ENCODE measurements at regions of chr5 and their contacts with region 1.

Region 1: GRCh38 chr5:42767491-42768105 is 11.0 kb downstream of the CCDC152 start:
- DNase-seq: peak in 1 of 2 experiments; percentile 31
- H3K4me3 ChIP-seq: no peak overlapping the region
- H3K4me3 Mint-ChIP-seq: peak overlapping the region; percentile 53
- H3K27ac Mint-ChIP-seq: no peak overlapping the region
- H3K4me1 ChIP-seq: peaks cover 12% of the 10 kb centered on the region
- H3K4me1 Mint-ChIP-seq: peaks cover 16% of the 10 kb centered on the region
- H3K27me3 ChIP-seq: no peaks in the 10 kb centered on the region
- H3K27me3 Mint-ChIP-seq: no peaks in the 10 kb centered on the region
- CTCF ChIP-seq: peak; percentile 24 to 63

Region 2: GRCh38 chr5:42005561-42006153 is 761.9 kb before region 1 on chr5:
- CTCF ChIA-PET with region 1: interaction called, 4 read pairs
- POLR2A ChIA-PET with region 1: no interaction called
- intact Hi-C with region 1: loop called (anchors 1 kb)
- DNase-seq: no peak
- H3K4me3 ChIP-seq: no peak overlapping the region
- H3K4me3 Mint-ChIP-seq: no peak overlapping the region
- H3K27ac Mint-ChIP-seq: no peak overlapping the region
- H3K4me1 ChIP-seq: no peaks in the 10 kb centered on the region
- H3K4me1 Mint-ChIP-seq: no peaks in the 10 kb centered on the region
- H3K27me3 ChIP-seq: no peaks in the 10 kb centered on the region
- H3K27me3 Mint-ChIP-seq: peaks cover 2% of the 10 kb centered on the region
- CTCF ChIP-seq: peak; percentile 66 to 74

Region 3: GRCh38 chr5:42423285-42424165 is 344.1 kb before region 1 on chr5 and contains the start of gene GHR:
- CTCF ChIA-PET with region 1: interaction called, 6 read pairs
- POLR2A ChIA-PET with region 1: no interaction called
- intact Hi-C with region 1: loop called (anchors 1 kb)
- DNase-seq: peak; percentile 83 to 84
- H3K4me3 ChIP-seq: peak within 1 kb of the TSS; percentile 63
- H3K4me3 Mint-ChIP-seq: no peak within 1 kb of the TSS
- H3K27ac Mint-ChIP-seq: no peak within 1 kb of the TSS
- H3K4me1 ChIP-seq: no peaks in the 10 kb centered on the region
- H3K4me1 Mint-ChIP-seq: no peaks in the 10 kb centered on the region
- H3K27me3 ChIP-seq: no peaks in the 10 kb centered on the region
- H3K27me3 Mint-ChIP-seq: no peaks in the 10 kb centered on the region
- CTCF ChIP-seq: peak; percentile 73 to 74
- total RNA-seq, gene GHR: 0.54 and 1.2 TPM in 2 replicates

Region 4: DNA sequence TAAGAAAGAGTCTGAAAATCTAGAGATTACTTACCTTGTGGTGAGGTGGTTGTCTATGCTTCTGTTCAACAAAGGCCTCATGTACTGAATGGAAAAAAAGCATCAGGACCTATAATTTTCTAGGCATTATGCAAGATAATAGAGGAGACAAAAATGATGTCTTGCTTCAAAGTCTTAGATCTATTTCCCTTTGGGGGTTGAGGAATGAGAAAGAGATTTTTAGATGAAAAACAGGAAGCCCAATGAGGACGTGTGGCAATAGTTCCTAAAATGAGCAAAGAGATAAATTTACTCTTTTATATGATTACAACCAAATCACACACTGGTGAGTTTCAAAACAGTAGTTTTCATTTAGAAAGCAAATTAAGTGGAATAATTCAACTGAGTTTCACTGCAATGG is 244.8 kb before region 1 on chr5:
- CTCF ChIA-PET with region 1: no interaction called
- POLR2A ChIA-PET with region 1: no interaction called
- intact Hi-C with region 1: no loop called
- DNase-seq: no peak
- H3K4me3 ChIP-seq: no peak overlapping the region
- H3K4me3 Mint-ChIP-seq: no peak overlapping the region
- H3K27ac Mint-ChIP-seq: no peak overlapping the region
- H3K4me1 ChIP-seq: no peaks in the 10 kb centered on the region
- H3K4me1 Mint-ChIP-seq: no peaks in the 10 kb centered on the region
- H3K27me3 ChIP-seq: no peaks in the 10 kb centered on the region
- H3K27me3 Mint-ChIP-seq: no peaks in the 10 kb centered on the region
- CTCF ChIP-seq: no peak

Region 5: DNA sequence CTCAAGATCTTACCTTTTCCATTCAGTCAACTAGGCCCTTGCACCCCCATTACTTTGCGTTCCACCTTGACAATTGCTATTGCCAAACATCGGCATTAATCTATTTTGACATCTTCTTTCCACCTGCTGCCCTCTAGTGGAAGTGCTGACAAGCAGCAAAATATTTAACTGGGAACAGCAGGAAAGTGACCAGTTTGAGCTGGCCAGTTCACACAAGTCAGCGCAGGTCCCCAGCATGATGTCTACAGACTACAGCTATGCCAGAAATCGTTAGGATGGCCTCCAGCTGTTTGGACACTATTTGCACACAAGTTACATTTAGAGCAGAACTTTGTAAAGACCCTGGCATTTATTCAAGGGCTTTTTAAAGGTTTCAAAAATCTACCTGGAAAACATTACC is 184.3 kb before region 1 on chr5:
- CTCF ChIA-PET with region 1: interaction called, 4 read pairs
- POLR2A ChIA-PET with region 1: no interaction called
- intact Hi-C with region 1: loop called (anchors 2 kb)
- DNase-seq: peak; percentile 54 to 66
- H3K4me3 ChIP-seq: no peak overlapping the region
- H3K4me3 Mint-ChIP-seq: no peak overlapping the region
- H3K27ac Mint-ChIP-seq: no peak overlapping the region
- H3K4me1 ChIP-seq: no peaks in the 10 kb centered on the region
- H3K4me1 Mint-ChIP-seq: no peaks in the 10 kb centered on the region
- H3K27me3 ChIP-seq: no peaks in the 10 kb centered on the region
- H3K27me3 Mint-ChIP-seq: peaks cover 3% of the 10 kb centered on the region
- CTCF ChIP-seq: peak; percentile 69 to 72

Region 6: DNA sequence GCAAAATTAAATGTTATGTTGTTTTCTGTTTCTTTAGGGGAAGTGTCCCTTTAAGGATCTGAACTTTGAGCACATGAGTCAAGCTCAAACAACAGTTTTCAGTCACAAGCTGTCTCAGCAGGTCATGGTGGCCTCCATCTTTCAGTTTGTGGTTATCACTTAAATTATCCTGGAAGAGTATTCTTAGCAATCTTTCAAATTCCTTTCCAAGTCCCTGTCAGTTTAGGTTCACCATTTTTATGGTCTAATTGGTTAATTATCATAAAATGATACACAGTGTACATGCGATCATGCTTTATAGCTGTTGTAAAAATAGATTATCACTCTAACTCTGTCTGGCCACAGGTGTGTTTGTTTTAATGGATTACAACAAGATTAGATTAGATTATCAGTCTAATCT is 87.2 kb after region 1 on chr5:
- CTCF ChIA-PET with region 1: no interaction called
- POLR2A ChIA-PET with region 1: no interaction called
- intact Hi-C with region 1: loop called (anchors 1 kb)
- DNase-seq: peak; percentile 60 to 74
- H3K4me3 ChIP-seq: no peak overlapping the region
- H3K4me3 Mint-ChIP-seq: no peak overlapping the region
- H3K27ac Mint-ChIP-seq: peak overlapping the region; percentile 51
- H3K4me1 ChIP-seq: peaks cover 39% of the 10 kb centered on the region
- H3K4me1 Mint-ChIP-seq: peaks cover 20% of the 10 kb centered on the region
- H3K27me3 ChIP-seq: no peaks in the 10 kb centered on the region
- H3K27me3 Mint-ChIP-seq: no peaks in the 10 kb centered on the region
- CTCF ChIP-seq: no peak

Region 7: DNA sequence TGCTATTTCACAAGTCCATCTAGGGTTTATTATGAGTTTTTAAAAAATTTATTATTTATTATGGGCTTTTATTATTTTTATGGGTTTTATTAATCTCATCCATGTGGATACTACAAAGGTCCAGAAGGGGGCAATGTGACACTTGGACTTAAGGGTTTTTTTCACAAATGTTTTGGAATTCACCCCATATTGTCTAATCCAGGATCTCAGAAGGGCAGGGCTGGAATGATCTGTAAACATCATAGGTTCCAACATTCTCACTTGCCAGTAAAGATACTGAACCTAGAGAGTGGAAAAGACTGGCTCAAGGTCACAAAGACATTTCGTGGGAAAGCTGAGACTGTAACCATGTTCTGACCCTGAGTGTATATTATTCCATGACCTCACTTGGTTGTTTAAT is 460.1 kb after region 1 on chr5:
- CTCF ChIA-PET with region 1: no interaction called
- POLR2A ChIA-PET with region 1: no interaction called
- intact Hi-C with region 1: no loop called
- DNase-seq: peak in 1 of 2 experiments; percentile 43
- H3K4me3 ChIP-seq: no peak overlapping the region
- H3K4me3 Mint-ChIP-seq: no peak overlapping the region
- H3K27ac Mint-ChIP-seq: no peak overlapping the region
- H3K4me1 ChIP-seq: no peaks in the 10 kb centered on the region
- H3K4me1 Mint-ChIP-seq: no peaks in the 10 kb centered on the region
- H3K27me3 ChIP-seq: no peaks in the 10 kb centered on the region
- H3K27me3 Mint-ChIP-seq: no peaks in the 10 kb centered on the region
- CTCF ChIP-seq: peak; percentile 52 to 67